Right lobe of liver (tissue), 6 donors: ENCODE measurements at regions of chr21 and their contacts with region 1.

Region 1: DNA sequence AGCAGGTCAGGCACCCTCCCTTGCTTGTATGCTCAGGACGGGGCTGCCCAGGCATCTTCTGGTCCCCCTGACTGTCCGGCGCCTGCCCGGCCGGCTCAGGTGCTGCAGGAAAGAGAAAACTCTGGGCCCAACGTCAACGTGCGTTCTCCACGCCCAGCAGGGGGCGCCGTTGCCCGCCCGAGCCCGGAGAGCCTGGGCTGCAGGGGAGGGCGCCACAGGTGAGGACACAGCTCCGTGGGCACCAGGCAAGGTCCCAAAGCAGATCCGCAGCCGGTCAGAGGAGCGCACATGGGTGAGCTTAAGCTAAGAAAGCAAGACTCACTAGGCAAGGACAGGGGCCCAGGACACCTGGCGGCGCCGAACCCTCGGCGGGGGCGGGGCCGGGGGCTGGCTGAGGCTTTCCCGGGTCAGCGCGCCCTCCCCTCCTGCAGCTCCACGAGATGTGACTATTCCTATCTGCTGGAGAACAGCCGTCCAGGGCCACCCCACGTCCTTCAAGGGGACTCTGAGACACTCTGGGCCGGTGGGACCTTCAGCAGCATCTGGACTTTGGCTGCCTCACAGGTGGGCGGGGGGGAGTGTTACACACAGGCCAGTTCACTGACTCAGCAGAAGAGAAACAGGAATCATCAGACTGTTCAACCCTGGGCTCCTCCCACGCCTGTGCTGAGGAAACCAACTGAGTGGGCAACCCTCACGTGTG is 29.3 kb downstream of the KRTAP10-1 start:
- DNase-seq: peak; percentile 74 to 78 (median 77)
- ATAC-seq: peak; percentile 71 to 77 (median 76)
- H3K4me3 ChIP-seq: peak overlapping the region in 1 of 3 donors; percentile 3
- H3K27ac ChIP-seq: no peak overlapping the region
- H3K4me1 ChIP-seq: peaks cover 0 to 4% (median 2%) of the 10 kb centered on the region in 4 donors
- H3K27me3 ChIP-seq: no peaks in the 10 kb centered on the region
- CTCF ChIP-seq: peak; percentile 85 to 91 (median 89)
- POLR2A ChIP-seq: no peak

Region 2: GRCh38 chr21:44785620-44786335 is 275.1 kb after region 1 on chr21:
- intact Hi-C with region 1: loop called (anchors 10 kb)
- DNase-seq: no peak
- ATAC-seq: peak in 3 of 4 donors; percentile 35 to 65 (median 50)
- H3K4me3 ChIP-seq: no peak overlapping the region
- H3K27ac ChIP-seq: no peak overlapping the region
- H3K4me1 ChIP-seq: peaks cover 0 to 13% (median 6%) of the 10 kb centered on the region in 4 donors
- H3K27me3 ChIP-seq: no peaks in the 10 kb centered on the region
- CTCF ChIP-seq: no peak
- POLR2A ChIP-seq: no peak

Region 3: GRCh38 chr21:44792702-44793591 is 282.3 kb after region 1 on chr21:
- intact Hi-C with region 1: loop called (anchors 10 kb)
- DNase-seq: peak in 2 of 3 donors; percentile 65 to 68
- ATAC-seq: peak; percentile 96 to 99 (median 97)
- H3K4me3 ChIP-seq: no peak overlapping the region
- H3K27ac ChIP-seq: no peak overlapping the region
- H3K4me1 ChIP-seq: peaks cover 0 to 26% (median 9%) of the 10 kb centered on the region in 4 donors
- H3K27me3 ChIP-seq: no peaks in the 10 kb centered on the region
- CTCF ChIP-seq: peak; percentile 80 to 85 (median 84)
- POLR2A ChIP-seq: no peak